Activated B cell treated with CpG ODN at 0.5 μM for 24 hours (primary cell): ENCODE measurements at regions of chr4 and their contacts with region 1.

Region 1: GRCh38 chr4:159142241-159142640 is 39.4 kb downstream of the RAPGEF2 start:
- DNase-seq: no peak
- ATAC-seq: no peak
- H3K4me3 Mint-ChIP-seq: no peak overlapping the region
- H3K27ac Mint-ChIP-seq: no peak overlapping the region
- H3K4me1 Mint-ChIP-seq: peaks cover 9% of the 10 kb centered on the region
- H3K27me3 Mint-ChIP-seq: no peaks in the 10 kb centered on the region
- CTCF ChIP-seq: no peak

Region 2: DNA sequence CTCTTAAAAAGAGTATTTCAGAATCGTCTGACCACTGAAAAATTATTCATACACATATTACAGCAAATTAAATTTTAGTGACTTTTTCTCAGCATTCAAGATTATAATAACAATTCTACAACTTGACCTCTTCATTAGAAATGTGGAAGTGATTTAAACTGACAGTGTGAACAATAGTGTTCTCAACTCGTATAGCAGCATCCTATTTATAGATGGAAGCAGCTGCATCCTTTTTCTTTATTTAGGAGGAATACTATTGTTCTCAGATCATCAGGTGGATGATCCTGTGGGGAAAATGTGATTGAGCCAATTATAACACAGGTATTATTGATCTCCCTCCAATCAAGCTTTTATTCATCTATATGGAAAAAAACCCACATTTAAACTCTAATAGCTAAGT is 17.4 kb after region 1 on chr4:
- CTCF ChIA-PET with region 1: no interaction called
- POLR2A ChIA-PET with region 1: no interaction called
- intact Hi-C with region 1: loop called (anchors 2 kb)
- DNase-seq: no peak
- ATAC-seq: no peak
- H3K4me3 Mint-ChIP-seq: no peak overlapping the region
- H3K27ac Mint-ChIP-seq: no peak overlapping the region
- H3K4me1 Mint-ChIP-seq: peaks cover 3% of the 10 kb centered on the region
- H3K27me3 Mint-ChIP-seq: no peaks in the 10 kb centered on the region
- CTCF ChIP-seq: no peak

Region 3: DNA sequence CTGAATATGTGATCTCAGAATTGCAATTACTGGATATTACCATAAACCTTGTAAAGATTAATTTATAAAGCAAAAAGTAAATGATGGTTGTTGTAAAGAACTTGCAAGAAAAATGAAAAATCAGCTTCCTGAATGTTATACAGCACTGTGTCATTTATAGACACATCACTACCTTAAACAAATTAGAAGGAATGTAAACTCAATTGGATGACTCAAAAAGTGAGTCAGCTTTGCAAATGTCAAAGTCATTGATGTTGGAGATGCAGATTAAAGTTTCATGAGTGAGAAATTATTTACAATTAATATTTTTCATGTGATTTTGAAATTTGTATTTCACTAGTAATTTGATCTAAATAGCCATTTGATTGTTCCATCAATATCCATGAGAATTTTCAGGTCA is 153.8 kb after region 1 on chr4:
- CTCF ChIA-PET with region 1: no interaction called
- POLR2A ChIA-PET with region 1: no interaction called
- intact Hi-C with region 1: no loop called
- DNase-seq: no peak
- ATAC-seq: no peak
- H3K4me3 Mint-ChIP-seq: no peak overlapping the region
- H3K27ac Mint-ChIP-seq: no peak overlapping the region
- H3K4me1 Mint-ChIP-seq: peaks cover 1% of the 10 kb centered on the region
- H3K27me3 Mint-ChIP-seq: no peaks in the 10 kb centered on the region
- CTCF ChIP-seq: no peak